Activated naive CD4-positive, alpha-beta T cell treated with anti-CD3 and anti-CD28 coated beads for 36 hours (primary cell): ENCODE measurements at regions of chr18 and their contacts with region 1.

Region 1: GRCh38 chr18:8696749-8697211 is 8.6 kb upstream of the MTCL1 start:
- DNase-seq: peak; percentile 76
- H3K4me3 Mint-ChIP-seq: no peak overlapping the region
- H3K27ac Mint-ChIP-seq: no peak overlapping the region
- H3K4me1 Mint-ChIP-seq: no peaks in the 10 kb centered on the region
- H3K27me3 Mint-ChIP-seq: peaks cover 8% of the 10 kb centered on the region

Region 2: GRCh38 chr18:8654503-8655451 is 42.0 kb before region 1 on chr18:
- CTCF ChIA-PET with region 1: interaction called, 5 read pairs
- intact Hi-C with region 1: loop called (anchors 2 kb)
- DNase-seq: no peak
- H3K4me3 Mint-ChIP-seq: no peak overlapping the region
- H3K27ac Mint-ChIP-seq: no peak overlapping the region
- H3K4me1 Mint-ChIP-seq: no peaks in the 10 kb centered on the region
- H3K27me3 Mint-ChIP-seq: peaks cover 7% of the 10 kb centered on the region

Region 3: DNA sequence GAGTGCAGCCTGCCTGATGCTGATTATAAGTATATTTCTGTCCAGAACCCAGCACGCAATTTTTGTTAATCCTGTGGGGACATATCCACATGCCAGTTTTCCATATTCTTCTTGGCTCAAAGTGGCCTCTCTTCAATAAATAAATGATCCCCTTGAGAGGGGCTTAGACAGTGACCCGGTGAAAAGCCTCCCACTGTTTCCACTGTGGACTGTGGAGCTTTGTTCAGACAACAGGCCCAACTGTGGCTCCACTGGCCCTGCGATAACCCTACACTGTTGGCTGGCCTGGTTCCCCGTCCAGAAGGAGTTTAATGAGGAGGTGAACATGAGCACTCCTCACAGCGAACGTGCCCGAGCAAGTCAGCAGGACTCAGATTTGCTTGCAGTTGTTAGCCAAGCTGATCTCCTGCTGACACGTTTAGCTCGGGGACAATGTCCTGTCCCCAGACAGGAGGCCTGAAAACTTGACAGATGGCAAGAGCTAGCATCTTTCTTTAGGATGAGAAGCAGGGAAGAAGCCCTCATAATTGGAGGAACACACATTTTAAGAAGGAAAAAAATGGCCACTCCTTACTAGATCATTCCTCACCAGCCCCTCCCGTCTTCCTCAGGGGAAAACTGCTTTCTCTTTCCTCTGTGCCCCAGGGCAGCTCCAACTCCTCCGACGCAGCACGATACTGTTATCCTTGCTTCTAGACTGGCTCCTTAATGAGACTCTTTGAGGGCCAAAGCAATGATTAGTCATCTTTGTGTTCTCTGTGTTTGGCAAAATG is 11.5 kb before region 1 on chr18:
- CTCF ChIA-PET with region 1: interaction called, 14 read pairs
- intact Hi-C with region 1: no loop called
- DNase-seq: no peak
- H3K4me3 Mint-ChIP-seq: no peak overlapping the region
- H3K27ac Mint-ChIP-seq: no peak overlapping the region
- H3K4me1 Mint-ChIP-seq: no peaks in the 10 kb centered on the region
- H3K27me3 Mint-ChIP-seq: no peaks in the 10 kb centered on the region

Region 4: DNA sequence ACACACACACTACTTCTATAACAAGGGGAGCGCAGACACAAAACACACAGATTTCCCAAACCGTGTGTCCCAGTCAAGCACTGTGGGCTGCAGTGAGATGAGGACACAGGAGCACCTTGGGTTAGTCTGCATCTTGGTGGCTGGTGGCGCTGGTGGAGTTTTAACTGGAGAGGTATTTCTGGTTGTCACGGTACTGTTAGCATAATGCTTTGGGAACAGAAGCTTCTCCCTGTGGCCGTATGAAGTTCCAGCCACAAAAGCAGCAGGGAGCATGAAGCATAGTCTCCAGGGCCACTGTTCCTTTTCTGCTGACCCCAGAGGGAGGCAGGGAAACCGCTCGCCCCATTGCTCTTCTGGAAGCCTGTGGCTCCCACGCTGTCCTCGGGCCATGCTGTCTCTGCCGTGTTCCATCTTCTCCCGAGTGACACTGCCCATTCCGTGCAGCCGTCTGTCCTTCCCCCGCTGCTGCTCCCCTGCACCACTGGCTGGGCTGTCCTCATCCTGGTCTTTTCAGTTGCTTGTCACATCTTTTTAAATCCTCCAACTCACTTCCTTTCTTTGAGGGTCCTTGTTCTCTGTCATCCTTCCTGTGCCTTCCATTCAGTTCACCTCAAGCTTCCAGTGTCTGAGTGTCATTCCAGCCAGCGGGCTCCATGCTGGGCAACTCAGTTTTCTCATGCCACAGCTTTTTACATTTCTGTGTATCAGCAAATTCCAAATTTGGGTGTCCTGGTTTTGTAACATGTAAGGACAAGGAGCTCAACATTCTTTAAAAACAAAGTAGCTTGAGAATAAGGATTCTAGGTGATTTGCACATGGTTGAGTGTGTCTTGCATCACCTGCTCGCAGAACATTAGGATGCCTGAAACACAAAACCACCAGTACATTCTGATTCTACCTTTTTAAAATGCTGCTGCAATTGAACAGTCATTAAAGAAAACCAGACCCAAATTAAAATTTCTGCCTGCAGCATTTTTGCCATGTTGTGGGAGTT is 133.6 kb after region 1 on chr18:
- CTCF ChIA-PET with region 1: no interaction called
- intact Hi-C with region 1: no loop called
- DNase-seq: no peak
- H3K4me3 Mint-ChIP-seq: no peak overlapping the region
- H3K27ac Mint-ChIP-seq: no peak overlapping the region
- H3K4me1 Mint-ChIP-seq: no peaks in the 10 kb centered on the region
- H3K27me3 Mint-ChIP-seq: no peaks in the 10 kb centered on the region

Region 5: DNA sequence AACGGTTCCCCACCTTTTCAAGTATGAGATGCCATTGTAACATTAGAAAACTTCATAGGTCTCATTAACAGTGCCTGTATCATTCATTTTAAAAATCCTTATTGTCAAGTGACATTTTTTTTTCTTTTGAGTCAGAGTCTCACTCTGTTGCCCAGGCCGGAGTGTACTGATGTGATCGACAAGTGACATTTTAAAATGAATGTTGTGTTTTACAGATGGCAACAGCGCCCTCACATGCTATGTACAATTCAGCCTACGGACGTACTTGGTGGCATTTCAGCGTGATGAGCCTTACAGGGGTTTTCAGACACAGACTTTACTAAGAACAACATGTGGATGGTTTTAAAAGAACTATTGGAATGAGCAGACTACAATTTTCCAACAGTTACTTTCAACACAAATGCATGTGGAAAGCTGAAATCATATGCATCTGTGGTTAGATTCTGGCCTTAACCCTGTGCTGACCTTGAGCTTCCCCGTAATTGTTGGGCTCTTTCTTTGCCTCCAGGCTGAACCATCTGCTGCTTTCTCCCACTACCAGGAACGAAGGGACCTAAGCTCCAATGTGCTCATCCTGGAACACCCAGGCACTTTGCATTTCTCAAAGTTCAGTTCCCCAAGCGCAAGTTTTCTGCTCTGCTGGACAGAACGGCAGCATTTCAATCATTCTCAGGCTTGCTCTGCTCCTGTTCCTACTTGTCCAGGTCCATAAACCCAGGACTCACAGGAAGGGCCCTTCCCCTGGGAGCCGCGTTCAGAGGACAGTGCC is 285.8 kb after region 1 on chr18:
- CTCF ChIA-PET with region 1: interaction called, 53 read pairs
- intact Hi-C with region 1: loop called (anchors 1 kb)
- DNase-seq: peak; percentile 55
- H3K4me3 Mint-ChIP-seq: no peak overlapping the region
- H3K27ac Mint-ChIP-seq: no peak overlapping the region
- H3K4me1 Mint-ChIP-seq: no peaks in the 10 kb centered on the region
- H3K27me3 Mint-ChIP-seq: no peaks in the 10 kb centered on the region

Region 6: DNA sequence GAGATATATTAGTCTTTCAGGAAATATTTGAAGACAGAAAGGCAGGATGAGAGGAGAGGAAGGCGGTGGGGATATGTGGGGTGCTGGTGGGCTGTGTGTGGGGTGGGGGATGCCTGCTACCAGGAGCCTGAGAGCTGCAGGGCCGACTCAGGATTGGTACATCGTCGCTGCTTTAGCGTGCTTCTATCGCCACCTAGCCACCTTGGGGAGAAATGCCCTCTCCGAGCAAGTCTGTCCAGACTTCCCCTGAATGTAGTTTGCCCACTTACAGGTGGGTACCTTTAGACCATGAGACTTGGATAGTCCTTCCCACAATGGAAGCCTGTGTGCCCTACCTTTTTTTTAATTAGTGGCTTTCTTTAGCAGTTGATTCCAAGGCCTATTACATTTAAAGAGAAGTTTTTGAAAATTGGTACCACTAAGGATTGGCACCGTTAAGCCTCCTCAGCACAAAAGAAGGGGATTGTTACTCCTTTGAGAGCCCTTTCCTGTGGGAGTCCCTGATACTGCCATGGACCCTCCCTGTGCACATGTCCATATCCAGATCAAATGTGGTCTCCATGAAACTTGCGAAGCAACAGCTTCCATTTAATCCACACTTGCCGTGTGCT is 291.6 kb after region 1 on chr18:
- CTCF ChIA-PET with region 1: interaction called, 53 read pairs
- intact Hi-C with region 1: loop called (anchors 1 kb)
- DNase-seq: peak; percentile 71
- H3K4me3 Mint-ChIP-seq: no peak overlapping the region
- H3K27ac Mint-ChIP-seq: no peak overlapping the region
- H3K4me1 Mint-ChIP-seq: no peaks in the 10 kb centered on the region
- H3K27me3 Mint-ChIP-seq: peaks cover 6% of the 10 kb centered on the region

Region 7: DNA sequence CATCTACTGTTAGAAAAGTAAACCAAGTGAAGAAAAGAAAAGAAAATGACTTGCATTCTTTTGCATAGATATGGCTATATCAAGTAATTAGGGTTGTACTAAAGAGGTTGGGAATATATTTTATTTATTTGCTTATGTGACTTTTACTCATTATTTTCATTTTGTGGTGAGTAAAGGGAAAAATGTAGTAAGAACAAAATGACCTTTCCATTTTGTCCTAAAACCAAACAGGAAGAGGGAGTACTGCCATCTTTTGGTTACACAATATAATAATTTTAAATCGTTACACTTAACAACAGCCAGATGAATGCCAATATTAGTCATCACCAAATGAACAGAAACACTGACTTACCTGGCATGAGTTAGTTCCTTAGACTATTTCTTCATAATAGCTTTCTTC is 358.4 kb after region 1 on chr18:
- CTCF ChIA-PET with region 1: no interaction called
- intact Hi-C with region 1: loop called (anchors 2 kb)
- DNase-seq: no peak
- H3K4me3 Mint-ChIP-seq: no peak overlapping the region
- H3K27ac Mint-ChIP-seq: no peak overlapping the region
- H3K4me1 Mint-ChIP-seq: peaks cover 4% of the 10 kb centered on the region
- H3K27me3 Mint-ChIP-seq: no peaks in the 10 kb centered on the region